Activated B cell treated with CpG ODN at 0.5 μM for 24 hours (primary cell): ENCODE measurements at regions of chr19 and their contacts with region 1.

Region 1: GRCh38 chr19:35030257-35031071 is at the start of gene SCN1B:
- DNase-seq: no peak
- ATAC-seq: peak; percentile 59
- H3K4me3 Mint-ChIP-seq: peak within 1 kb of the TSS; percentile 72
- H3K27ac Mint-ChIP-seq: no peak within 1 kb of the TSS
- H3K4me1 Mint-ChIP-seq: peaks cover 5% of the 10 kb centered on the region
- H3K27me3 Mint-ChIP-seq: peaks cover 22% of the 10 kb centered on the region
- CTCF ChIP-seq: no peak
- total RNA-seq, gene SCN1B: 0.34 and 0.47 TPM in 2 replicates

Region 2: DNA sequence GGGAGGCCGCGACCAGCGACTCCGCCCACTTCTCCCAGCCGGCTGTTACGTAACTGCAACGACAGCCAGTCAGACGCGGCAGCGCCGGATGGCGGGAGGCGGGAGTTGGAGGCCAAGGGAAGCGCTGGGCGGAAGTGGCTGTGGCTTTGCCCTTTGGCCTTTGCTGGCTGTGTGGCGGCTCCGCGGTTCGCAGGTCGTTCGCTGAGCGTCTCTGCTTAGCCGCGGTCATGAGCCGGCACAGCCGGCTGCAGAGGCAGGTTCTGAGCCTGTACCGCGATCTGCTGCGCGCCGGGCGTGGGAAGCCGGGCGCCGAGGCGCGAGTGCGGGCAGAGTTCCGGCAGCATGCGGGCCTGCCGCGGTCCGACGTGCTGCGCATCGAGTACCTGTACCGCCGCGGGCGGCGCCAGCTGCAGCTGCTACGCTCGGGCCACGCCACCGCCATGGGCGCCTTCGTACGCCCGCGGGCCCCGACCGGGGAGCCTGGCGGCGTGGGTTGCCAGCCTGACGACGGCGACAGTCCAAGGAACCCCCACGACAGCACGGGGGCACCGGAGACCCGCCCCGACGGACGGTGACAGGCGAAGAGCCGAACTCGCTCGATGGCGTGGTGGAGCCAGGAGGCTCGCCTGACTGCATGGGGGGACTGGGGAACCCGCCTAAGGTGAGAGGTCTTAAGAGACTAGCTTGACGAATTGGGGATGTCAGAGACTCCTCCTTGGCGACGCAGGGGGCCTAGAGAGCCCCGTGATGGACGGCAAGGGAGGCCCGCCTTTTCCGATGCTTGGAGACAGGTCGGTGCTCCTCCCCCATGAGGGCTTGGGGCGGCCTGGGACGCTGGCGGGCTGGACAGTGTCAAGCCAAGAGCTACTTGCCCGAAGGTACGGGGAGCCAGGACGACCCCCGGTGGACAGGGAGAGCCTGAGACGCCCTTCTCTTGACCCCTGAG is 964.9 kb after region 1 on chr19 and contains the start of gene SDHAF1:
- CTCF ChIA-PET with region 1: no interaction called
- POLR2A ChIA-PET with region 1: interaction called, 10 read pairs
- intact Hi-C with region 1: no loop called
- DNase-seq: peak; percentile 88
- ATAC-seq: peak; percentile 94
- H3K4me3 Mint-ChIP-seq: peak within 1 kb of the TSS; percentile 94
- H3K27ac Mint-ChIP-seq: peak within 1 kb of the TSS; percentile 94
- H3K4me1 Mint-ChIP-seq: peaks cover 33% of the 10 kb centered on the region
- H3K27me3 Mint-ChIP-seq: no peaks in the 10 kb centered on the region
- CTCF ChIP-seq: no peak
- total RNA-seq, gene SDHAF1: 20.3 and 21.9 TPM in 2 replicates